ENCODE measurements at regions of chr14 and their contacts with region 1.

Region 1: GRCh38 chr14:75126679-75127473 is at the start of gene NEK9:
- DNase-seq: peak; percentile 77 to 95 (median 88)
- ATAC-seq: peak; percentile 88 to 91
- H3K4me3 Mint-ChIP-seq: peak within 1 kb of the TSS; percentile 80 to 98 (median 96)
- H3K27ac Mint-ChIP-seq: peak within 1 kb of the TSS; percentile 95 to 99 (median 98)
- H3K4me1 Mint-ChIP-seq: peaks cover 28 to 50% (median 43%) of the 10 kb centered on the region in 4 donors
- H3K27me3 Mint-ChIP-seq: no peaks in the 10 kb centered on the region
- polyA plus RNA-seq, gene NEK9: 18.5 to 19.8 (median 19.0) TPM

Region 2: DNA sequence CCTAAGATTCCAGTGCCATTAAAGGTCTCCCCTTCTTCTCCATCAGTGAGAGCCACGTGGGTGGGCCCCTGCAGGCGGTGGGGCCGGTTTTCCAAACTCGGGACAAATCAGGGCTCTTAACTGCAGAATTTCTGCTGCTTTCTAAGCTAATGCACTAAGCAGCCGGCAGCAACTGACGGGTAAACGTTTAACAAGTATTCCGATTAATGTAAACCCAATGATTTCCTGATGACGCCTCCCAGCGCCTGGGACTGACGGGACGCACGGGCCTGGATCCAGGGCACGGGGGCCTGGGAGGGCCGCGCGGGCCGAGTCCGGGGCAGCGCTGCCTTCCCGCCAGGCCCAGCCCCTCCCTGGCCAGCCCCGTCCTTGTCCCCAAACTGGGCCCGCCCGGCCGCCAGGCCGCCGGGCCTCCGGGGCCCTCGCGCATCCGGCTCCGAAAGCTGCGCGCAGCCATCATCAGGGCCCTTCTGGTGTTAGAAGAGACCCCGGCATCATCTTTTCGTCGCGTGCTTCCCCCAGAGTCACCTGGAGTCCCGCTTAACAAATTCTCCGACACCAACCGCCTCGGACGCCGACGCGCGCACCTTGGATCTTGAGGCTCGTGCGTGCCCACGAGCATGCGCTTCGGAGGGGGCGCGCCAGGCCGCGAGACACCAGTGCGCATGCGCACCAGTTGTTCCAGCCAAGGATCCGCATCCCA is 75.9 kb before region 1 on chr14 and contains the start of gene MLH3:
- POLR2A ChIA-PET with region 1: no interaction called
- DNase-seq: peak; percentile 68 to 89 (median 78)
- ATAC-seq: peak; percentile 88 to 90
- H3K4me3 Mint-ChIP-seq: peak within 1 kb of the TSS; percentile 89 to 97 (median 94)
- H3K27ac Mint-ChIP-seq: peak within 1 kb of the TSS; percentile 91 to 99 (median 97)
- H3K4me1 Mint-ChIP-seq: peaks cover 10 to 44% (median 35%) of the 10 kb centered on the region in 4 donors
- H3K27me3 Mint-ChIP-seq: peaks cover 0 to 3% (median 0%) of the 10 kb centered on the region in 5 donors
- polyA plus RNA-seq, gene MLH3: 9.3 to 11.9 (median 10.8) TPM

Region 3: DNA sequence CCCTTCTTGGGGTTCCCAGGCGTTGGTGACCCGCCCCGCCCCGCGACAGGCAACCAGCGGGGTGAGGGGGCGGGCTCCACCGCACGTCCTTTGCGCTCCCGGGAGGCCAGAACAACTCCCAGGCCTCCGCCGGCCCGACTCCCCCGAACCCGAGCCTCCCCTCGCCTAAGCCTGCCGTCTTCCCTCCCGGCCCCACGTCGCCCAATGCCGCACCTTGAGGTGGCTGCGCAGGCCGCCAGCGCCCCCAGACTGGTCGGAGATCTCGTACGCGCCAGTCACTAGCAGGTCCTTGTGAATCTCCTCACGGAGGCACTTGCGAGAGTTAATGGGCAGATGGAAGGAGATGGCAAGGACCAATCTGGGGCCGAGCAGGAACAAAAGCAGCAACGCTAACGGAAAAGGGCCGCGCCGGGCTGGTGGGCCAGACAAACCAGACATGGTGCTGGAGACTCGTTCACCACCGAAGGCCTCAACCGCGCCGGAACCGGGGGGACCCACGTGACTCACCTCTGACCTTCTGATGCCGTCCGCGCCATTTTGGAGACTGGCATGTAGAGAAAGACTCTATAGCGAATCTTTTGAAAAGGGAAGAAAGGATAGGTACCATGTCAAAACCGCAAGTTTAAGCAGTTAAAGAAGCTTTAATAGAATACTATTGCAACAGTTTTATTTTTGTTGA is 49.4 kb after region 1 on chr14 and contains the start of gene TMED10:
- POLR2A ChIA-PET with region 1: interaction called, 16 read pairs
- DNase-seq: peak; percentile 84 to 99 (median 90)
- ATAC-seq: peak; percentile 76 to 77
- H3K4me3 Mint-ChIP-seq: peak within 1 kb of the TSS; percentile 86 to 98 (median 93)
- H3K27ac Mint-ChIP-seq: peak within 1 kb of the TSS; percentile 94 to 99 (median 97)
- H3K4me1 Mint-ChIP-seq: peaks cover 11 to 59% (median 48%) of the 10 kb centered on the region in 4 donors
- H3K27me3 Mint-ChIP-seq: no peaks in the 10 kb centered on the region
- polyA plus RNA-seq, gene TMED10: 219 to 318 (median 272) TPM